ENCODE measurements at regions of chr19 and their contacts with region 1.

Region 1: DNA sequence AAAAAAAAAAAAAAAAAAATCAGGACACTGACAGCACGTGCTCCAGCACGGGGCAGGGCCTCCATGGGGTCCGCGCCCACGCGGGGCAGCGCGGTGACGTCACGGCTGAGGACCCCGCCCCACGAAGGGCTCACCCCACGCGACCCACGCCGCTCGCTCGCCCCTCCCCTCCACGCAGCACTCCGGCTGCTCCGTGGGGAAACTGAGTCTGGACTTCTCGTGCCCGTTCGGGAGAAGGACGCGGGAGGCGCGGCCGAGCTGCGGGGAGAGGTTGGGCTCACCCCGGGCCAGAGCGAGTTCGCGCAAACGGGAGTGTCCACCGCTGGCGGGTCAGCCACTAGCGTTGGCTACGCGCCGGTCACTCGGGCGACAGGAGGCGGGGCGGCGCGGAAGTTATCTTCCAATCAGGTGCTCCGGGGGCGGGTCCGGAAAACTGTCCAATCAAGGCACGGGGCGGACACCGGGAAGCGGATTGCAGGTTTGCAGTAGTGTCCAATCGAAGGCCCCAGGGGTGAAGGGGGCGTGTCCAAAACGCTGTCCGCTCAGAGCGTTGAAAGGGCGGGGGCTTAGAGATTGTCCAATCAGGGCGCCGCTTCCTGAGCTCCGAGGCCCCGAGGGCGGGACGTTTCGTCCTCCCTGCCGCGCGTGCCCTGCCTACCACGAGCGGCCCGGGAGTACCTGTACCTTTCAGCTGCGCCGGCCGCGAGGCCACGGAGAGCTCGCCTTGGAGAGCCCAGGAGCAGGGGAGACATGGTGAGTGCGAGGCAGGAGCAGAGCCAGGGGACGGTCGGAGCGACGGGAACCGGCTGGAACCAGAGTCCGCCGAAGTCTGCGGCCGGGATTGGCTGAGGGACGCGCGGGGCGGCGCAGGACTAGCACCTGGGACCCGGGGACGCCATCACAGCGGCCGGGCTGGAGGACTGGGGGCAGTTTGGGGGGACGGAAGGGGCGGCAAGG is at the start of gene ZNF57:
- DNase-seq: peak; percentile 83 to 98 (median 96)
- ATAC-seq: peak; percentile 99
- H3K4me3 ChIP-seq: peak within 1 kb of the TSS; percentile 79
- H3K4me3 Mint-ChIP-seq: peak within 1 kb of the TSS; percentile 88 to 99 (median 96)
- H3K27ac ChIP-seq: peak within 1 kb of the TSS; percentile 63
- H3K27ac Mint-ChIP-seq: peak within 1 kb of the TSS; percentile 55 to 91 (median 85)
- H3K4me1 ChIP-seq: peaks cover 0 to 4% of the 10 kb centered on the region in 2 donors
- H3K4me1 Mint-ChIP-seq: peaks cover 11 to 28% (median 21%) of the 10 kb centered on the region in 7 donors
- H3K27me3 ChIP-seq: no peaks in the 10 kb centered on the region
- H3K27me3 Mint-ChIP-seq: no peaks in the 10 kb centered on the region
- total RNA-seq, gene ZNF57: 1.7 to 5.0 (median 2.2) TPM

Region 2: GRCh38 chr19:2887391-2887914 is 13.1 kb before region 1 on chr19:
- CTCF ChIA-PET with region 1: no interaction called
- POLR2A ChIA-PET with region 1: interaction called, 4 read pairs
- intact Hi-C with region 1: loop called in 1 of 2 experiments (anchors 1 kb)
- DNase-seq: peak in 4 of 9 donors; percentile 14 to 19 (median 17)
- ATAC-seq: peak; percentile 50
- H3K4me3 ChIP-seq: no peak overlapping the region
- H3K4me3 Mint-ChIP-seq: peak overlapping the region in 1 of 10 donors; percentile 42
- H3K27ac ChIP-seq: no peak overlapping the region
- H3K27ac Mint-ChIP-seq: peak overlapping the region in 4 of 9 donors; percentile 26 to 84 (median 76)
- H3K4me1 ChIP-seq: no peaks in the 10 kb centered on the region
- H3K4me1 Mint-ChIP-seq: peaks cover 0 to 13% (median 8%) of the 10 kb centered on the region in 7 donors
- H3K27me3 ChIP-seq: no peaks in the 10 kb centered on the region
- H3K27me3 Mint-ChIP-seq: no peaks in the 10 kb centered on the region

Region 3: DNA sequence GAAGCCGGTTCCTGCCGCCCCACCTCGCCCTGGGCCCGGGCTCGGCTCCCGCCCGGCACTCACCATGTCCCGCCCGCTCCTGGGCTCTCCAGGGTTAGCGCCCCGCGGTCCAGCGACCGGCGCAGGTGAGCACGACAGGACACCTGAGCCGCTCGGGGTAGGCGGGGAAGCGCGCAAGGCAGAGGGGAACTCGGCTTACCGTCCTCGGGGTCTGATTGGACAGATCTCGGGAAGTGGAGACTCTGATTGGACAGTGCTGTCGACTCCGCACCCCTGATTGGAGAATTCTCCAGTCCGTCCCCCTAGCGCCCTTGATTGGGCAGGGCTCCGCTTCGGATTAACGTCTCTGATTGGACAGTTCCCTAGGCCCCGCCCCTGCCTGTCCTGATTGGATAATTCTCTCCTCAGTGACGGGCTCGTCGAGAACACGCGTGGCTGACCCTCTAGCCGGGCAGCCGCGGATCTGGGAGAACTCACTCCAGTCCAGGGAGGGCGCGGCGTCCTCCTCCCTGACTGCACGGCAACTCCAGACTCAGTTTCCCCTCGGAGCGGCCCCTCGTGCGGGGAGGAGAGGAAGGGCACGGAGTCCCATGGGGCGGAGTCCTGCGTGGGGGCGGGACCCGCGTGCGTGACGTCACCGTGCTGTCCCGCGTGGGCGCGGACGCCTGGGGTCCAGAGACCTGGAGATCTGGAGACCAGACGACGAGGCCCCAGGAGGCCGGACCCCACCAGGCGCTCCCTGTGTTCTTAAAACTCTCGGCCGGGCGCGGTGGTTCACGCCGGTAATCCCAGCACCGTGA is 44.4 kb after region 1 on chr19 and contains the start of gene ZNF77:
- CTCF ChIA-PET with region 1: no interaction called
- POLR2A ChIA-PET with region 1: interaction called, 4 read pairs
- intact Hi-C with region 1: loop called (anchors 1 kb)
- DNase-seq: peak; percentile 93 to 99 (median 99)
- ATAC-seq: peak; percentile 99
- H3K4me3 ChIP-seq: peak within 1 kb of the TSS; percentile 86
- H3K4me3 Mint-ChIP-seq: peak within 1 kb of the TSS; percentile 94 to 99 (median 97)
- H3K27ac ChIP-seq: peak within 1 kb of the TSS; percentile 87
- H3K27ac Mint-ChIP-seq: peak within 1 kb of the TSS; percentile 90 to 99 (median 98)
- H3K4me1 ChIP-seq: peaks cover 11 to 15% of the 10 kb centered on the region in 2 donors
- H3K4me1 Mint-ChIP-seq: peaks cover 15 to 43% (median 34%) of the 10 kb centered on the region in 7 donors
- H3K27me3 ChIP-seq: no peaks in the 10 kb centered on the region
- H3K27me3 Mint-ChIP-seq: no peaks in the 10 kb centered on the region
- total RNA-seq, gene ZNF77: 2.0 to 5.8 (median 4.3) TPM